Breast epithelium (tissue), 4 donors: ENCODE measurements at regions of chr12 and their contacts with region 1.

Region 1: DNA sequence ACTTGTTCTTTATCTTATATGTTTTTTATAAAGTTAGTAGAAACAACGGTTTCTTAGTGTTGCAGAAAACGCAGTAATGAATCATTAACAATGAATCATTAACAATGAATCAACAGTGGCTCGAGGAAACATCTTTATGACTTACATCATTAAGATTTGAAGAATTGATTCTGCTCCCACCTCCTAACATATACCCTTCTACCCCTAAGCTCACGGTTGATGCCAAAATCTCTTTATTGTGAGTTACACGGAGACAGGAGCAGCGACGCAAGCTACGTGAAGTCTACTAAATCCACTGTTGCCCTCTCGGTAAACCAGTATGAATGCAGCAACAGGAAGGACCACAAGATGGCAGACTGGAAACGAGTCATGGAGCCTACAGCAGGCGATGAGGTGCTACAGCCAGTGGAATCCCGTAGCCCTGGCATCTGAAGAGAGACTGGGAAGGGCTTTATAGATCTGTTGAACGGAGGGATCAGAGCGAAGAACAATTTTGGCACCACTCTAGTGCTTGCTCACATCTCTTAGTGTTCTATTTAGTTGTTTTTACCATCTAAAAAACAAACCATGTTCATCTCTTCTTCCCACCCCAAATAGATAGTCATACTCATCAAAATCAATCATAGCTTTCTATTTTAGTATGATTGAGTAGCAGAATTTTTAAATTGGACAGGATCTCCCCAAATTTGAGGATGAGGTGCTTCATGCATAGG is 332.7 kb downstream of the DUSP6 start:
- DNase-seq: peak; percentile 58 to 74
- H3K4me3 ChIP-seq: peak overlapping the region in 2 of 3 donors; percentile 36 to 54
- H3K27ac ChIP-seq: no peak overlapping the region
- H3K4me1 ChIP-seq: no peaks in the 10 kb centered on the region
- H3K27me3 ChIP-seq: no peaks in the 10 kb centered on the region
- CTCF ChIP-seq: peak; percentile 65 to 84 (median 81)
- POLR2A ChIP-seq: no peak

Region 2: DNA sequence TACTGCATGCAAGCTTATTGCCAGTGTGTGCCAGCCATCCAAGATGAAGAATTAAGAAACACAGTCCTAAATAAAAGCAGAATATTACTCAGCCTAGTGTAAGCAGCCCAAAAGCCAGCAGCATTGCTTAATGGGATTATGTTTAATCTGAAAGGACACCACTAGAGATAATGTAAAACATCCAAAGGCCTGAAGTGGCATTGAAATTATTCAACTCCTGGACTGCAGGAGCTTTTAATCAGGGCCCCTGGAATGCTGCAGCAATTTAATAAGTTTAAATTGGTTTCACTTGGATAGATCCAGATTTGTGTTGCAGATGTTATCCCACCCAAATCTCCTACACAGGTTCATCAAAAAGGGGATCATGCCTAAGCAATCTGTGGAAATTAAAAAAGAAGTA is 1183.4 kb before region 1 on chr12:
- intact Hi-C with region 1: no loop called
- DNase-seq: no peak
- H3K4me3 ChIP-seq: no peak overlapping the region
- H3K27ac ChIP-seq: no peak overlapping the region
- H3K4me1 ChIP-seq: no peaks in the 10 kb centered on the region
- H3K27me3 ChIP-seq: no peaks in the 10 kb centered on the region
- CTCF ChIP-seq: no peak
- POLR2A ChIP-seq: no peak

Region 3: GRCh38 chr12:88153959-88154358 is 865.6 kb before region 1 on chr12:
- intact Hi-C with region 1: loop called (anchors 10 kb)
- DNase-seq: no peak
- H3K4me3 ChIP-seq: no peak overlapping the region
- H3K27ac ChIP-seq: no peak overlapping the region
- H3K4me1 ChIP-seq: no peaks in the 10 kb centered on the region
- H3K27me3 ChIP-seq: no peaks in the 10 kb centered on the region
- CTCF ChIP-seq: peak in 1 of 3 donors; percentile 27
- POLR2A ChIP-seq: no peak

Region 4: GRCh38 chr12:89524541-89525285 is 505.1 kb after region 1 on chr12 and contains the start of gene GALNT4:
- intact Hi-C with region 1: loop called (anchors 5 kb)
- DNase-seq: peak; percentile 75 to 89
- H3K4me3 ChIP-seq: peak within 1 kb of the TSS; percentile 85 to 99 (median 98)
- H3K27ac ChIP-seq: peak within 1 kb of the TSS; percentile 93 to 97
- H3K4me1 ChIP-seq: peaks cover 0 to 10% of the 10 kb centered on the region in 2 donors
- H3K27me3 ChIP-seq: no peaks in the 10 kb centered on the region
- CTCF ChIP-seq: peak; percentile 69 to 79 (median 70)
- POLR2A ChIP-seq: no peak
- total RNA-seq, gene GALNT4: 5.3 to 11.1 (median 7.2) TPM